Activated naive CD4-positive, alpha-beta T cell treated with anti-CD3 and anti-CD28 coated beads for 36 hours (primary cell): ENCODE measurements at regions of chr10 and their contacts with region 1.

Region 1: DNA sequence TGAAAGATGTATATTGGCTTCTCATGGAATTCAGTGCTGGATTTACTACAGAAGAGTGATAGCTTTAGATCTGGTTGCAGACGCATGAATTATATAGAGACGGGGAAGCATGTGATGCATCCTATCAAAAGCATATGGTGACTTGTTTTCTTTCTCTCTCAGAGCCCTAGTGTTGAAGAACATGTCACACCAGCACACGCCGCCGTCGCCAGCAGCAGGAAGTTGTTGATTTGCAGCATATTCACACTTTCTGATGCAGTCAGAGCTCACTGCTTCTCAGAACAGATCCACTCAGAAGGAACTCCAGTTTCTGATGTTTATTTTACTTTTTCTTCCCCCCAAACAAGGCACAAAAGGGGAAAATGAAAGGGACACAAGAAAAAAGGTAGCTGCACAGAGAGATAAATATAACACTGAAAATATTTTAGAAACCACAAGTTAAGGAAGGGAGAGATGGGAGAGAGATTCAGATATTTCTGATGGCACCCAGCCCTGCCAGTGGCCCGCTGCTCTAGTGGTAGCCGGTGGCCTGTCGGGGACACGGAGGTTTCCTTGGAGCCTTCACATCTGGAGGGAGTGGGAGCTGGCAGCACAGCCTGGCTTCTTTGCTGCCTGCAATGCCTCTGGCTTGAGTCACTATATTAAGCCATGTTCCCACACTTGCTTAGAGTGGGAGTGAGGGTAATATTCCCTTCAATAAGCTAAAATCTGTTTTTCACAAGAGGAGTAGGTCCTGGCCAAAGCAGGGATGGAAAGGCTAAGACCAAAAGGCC is 123.2 kb downstream of the NRP1 start:
- DNase-seq: peak; percentile 65
- H3K4me3 Mint-ChIP-seq: no peak overlapping the region
- H3K27ac Mint-ChIP-seq: peak overlapping the region; percentile 55
- H3K4me1 Mint-ChIP-seq: peaks cover 20% of the 10 kb centered on the region
- H3K27me3 Mint-ChIP-seq: no peaks in the 10 kb centered on the region

Region 2: GRCh38 chr10:33193057-33193700 is 18.1 kb before region 1 on chr10:
- CTCF ChIA-PET with region 1: interaction called, 12 read pairs
- intact Hi-C with region 1: no loop called
- DNase-seq: peak; percentile 89
- H3K4me3 Mint-ChIP-seq: no peak overlapping the region
- H3K27ac Mint-ChIP-seq: no peak overlapping the region
- H3K4me1 Mint-ChIP-seq: no peaks in the 10 kb centered on the region
- H3K27me3 Mint-ChIP-seq: peaks cover 4% of the 10 kb centered on the region

Region 3: GRCh38 chr10:33229252-33229948 is 18.1 kb after region 1 on chr10:
- CTCF ChIA-PET with region 1: no interaction called
- intact Hi-C with region 1: no loop called
- DNase-seq: no peak
- H3K4me3 Mint-ChIP-seq: no peak overlapping the region
- H3K27ac Mint-ChIP-seq: no peak overlapping the region
- H3K4me1 Mint-ChIP-seq: no peaks in the 10 kb centered on the region
- H3K27me3 Mint-ChIP-seq: no peaks in the 10 kb centered on the region

Region 4: DNA sequence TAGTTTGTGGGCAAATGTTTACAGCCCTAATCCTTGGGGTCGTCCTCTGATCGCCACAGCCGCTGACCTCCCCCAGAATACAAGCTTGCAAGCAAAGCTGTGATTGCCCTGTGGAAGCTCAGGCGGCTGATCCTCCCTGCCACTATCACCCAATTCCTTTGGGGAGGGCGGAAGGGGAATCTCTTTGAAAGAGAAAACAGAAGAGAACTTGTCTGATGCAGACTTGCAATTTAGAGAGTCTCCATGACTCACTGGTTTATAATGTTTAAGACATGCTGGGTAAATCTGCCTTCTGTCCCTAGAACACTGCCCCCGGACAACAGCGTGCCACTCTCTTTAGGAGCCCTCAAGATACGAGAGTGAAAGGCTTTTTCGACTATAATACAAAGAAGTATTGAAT is 47.7 kb after region 1 on chr10:
- CTCF ChIA-PET with region 1: no interaction called
- intact Hi-C with region 1: loop called (anchors 1 kb)
- DNase-seq: no peak
- H3K4me3 Mint-ChIP-seq: no peak overlapping the region
- H3K27ac Mint-ChIP-seq: no peak overlapping the region
- H3K4me1 Mint-ChIP-seq: peaks cover 9% of the 10 kb centered on the region
- H3K27me3 Mint-ChIP-seq: peaks cover 39% of the 10 kb centered on the region